Heart right ventricle (tissue), 16 donors: ENCODE measurements at regions of chr12 and their contacts with region 1.

Region 1: DNA sequence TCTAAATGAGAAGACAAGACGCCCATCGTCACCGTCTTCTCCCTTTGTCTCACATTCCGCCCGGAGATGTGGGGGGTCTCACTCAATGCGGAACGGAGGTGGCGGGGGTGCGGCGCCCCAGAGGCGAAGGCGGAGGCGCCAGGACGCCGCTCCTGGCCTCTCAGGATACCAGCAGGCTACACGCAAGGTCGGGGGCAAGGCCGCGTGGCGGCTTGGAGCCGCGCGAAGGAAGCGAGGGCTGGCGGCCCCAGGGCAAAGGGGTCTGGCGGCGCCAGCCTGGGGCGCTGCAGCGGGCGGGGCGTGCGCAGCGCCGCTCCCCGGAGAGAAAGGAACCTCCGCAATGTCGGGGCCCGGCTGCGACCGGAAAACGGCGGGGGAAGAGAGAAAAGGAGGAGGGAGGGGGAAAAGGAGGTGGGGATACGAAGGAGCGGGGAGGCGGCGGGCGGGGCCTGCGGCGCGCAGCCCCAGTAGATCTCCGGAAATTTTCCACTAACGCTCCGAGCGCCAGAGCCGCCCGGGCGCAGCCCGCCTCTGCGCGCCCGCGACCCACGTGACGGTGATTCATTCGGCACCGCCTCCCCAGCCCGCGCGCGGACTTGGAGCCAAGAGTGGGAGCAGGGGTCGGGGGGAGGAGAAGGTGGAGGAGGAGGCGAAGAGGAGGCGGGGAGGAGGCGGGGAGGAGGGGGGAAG is 10.5 kb upstream of the SLC38A2 start:
- DNase-seq: peak; percentile 97 to 98
- ATAC-seq: peak; percentile 92 to 97 (median 94)
- H3K4me3 ChIP-seq: peak overlapping the region; percentile 32 to 89 (median 70)
- H3K27ac ChIP-seq: peak overlapping the region; percentile 94 to 100 (median 99)
- H3K4me1 ChIP-seq: peaks cover 0 to 55% (median 46%) of the 10 kb centered on the region in 9 donors
- H3K27me3 ChIP-seq: no peaks in the 10 kb centered on the region
- CTCF ChIP-seq: peak in 2 of 9 donors; percentile 39 to 53

Region 2: GRCh38 chr12:45990468-45991283 is 392.4 kb before region 1 on chr12 and contains the start of gene SCAF11:
- intact Hi-C with region 1: loop called in 3 of 10 experiments (anchors 10 kb)
- DNase-seq: peak; percentile 100
- ATAC-seq: peak; percentile 92 to 97 (median 95)
- H3K4me3 ChIP-seq: peak within 1 kb of the TSS; percentile 68 to 97 (median 86)
- H3K27ac ChIP-seq: peak within 1 kb of the TSS; percentile 96 to 100 (median 99)
- H3K4me1 ChIP-seq: peaks cover 7 to 49% (median 39%) of the 10 kb centered on the region in 9 donors
- H3K27me3 ChIP-seq: no peaks in the 10 kb centered on the region
- CTCF ChIP-seq: peak; percentile 90 to 98 (median 94)
- total RNA-seq, gene SCAF11: 71.9 to 112 (median 87.3) TPM

Region 3: GRCh38 chr12:46227616-46228015 is 155.5 kb before region 1 on chr12:
- intact Hi-C with region 1: no loop called
- DNase-seq: no peak
- ATAC-seq: no peak
- H3K4me3 ChIP-seq: no peak overlapping the region
- H3K27ac ChIP-seq: no peak overlapping the region
- H3K4me1 ChIP-seq: peaks cover 0 to 40% (median 9%) of the 10 kb centered on the region in 9 donors
- H3K27me3 ChIP-seq: no peaks in the 10 kb centered on the region
- CTCF ChIP-seq: no peak

Region 4: DNA sequence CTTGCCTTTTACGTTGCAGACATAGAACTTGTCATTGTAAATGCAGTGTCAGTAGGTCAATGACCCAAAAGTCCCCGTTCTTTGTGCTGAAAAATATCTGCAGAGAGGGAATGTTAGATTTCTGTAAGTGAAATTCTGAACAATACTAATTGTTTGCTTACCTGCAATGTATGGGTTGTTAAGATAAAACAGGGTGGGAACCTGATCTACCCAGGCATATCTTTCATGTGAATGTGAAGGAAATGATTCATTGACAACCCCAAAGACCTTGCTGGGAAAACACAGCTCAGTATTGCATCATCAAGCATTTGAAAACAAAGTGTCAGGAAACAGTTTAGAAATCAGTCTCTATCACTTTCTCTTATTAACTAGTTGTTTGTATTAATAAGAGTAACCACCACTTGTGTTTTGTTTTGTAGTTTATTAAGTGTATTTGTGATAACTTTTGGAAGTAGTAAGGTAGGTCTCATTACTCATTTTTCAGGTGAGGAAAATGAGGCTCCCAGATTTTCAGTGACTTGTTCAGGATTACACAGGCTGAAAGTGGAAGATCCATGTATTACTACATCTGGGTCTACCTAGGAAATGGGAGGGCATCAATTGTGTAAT is 47.3 kb after region 1 on chr12:
- intact Hi-C with region 1: loop called in 3 of 10 experiments (anchors 2 to 10 kb)
- DNase-seq: peak in 1 of 2 donors; percentile 16
- ATAC-seq: peak in 7 of 8 donors; percentile 54 to 86 (median 76)
- H3K4me3 ChIP-seq: no peak overlapping the region
- H3K27ac ChIP-seq: peak overlapping the region in 8 of 10 donors; percentile 49 to 83 (median 71)
- H3K4me1 ChIP-seq: peaks cover 0 to 34% (median 28%) of the 10 kb centered on the region in 9 donors
- H3K27me3 ChIP-seq: no peaks in the 10 kb centered on the region
- CTCF ChIP-seq: no peak

Region 5: GRCh38 chr12:46459861-46460545 is 76.9 kb after region 1 on chr12:
- intact Hi-C with region 1: loop called in 2 of 10 experiments (anchors 5 to 10 kb)
- DNase-seq: no peak
- ATAC-seq: peak in 4 of 8 donors; percentile 20 to 32 (median 30)
- H3K4me3 ChIP-seq: no peak overlapping the region
- H3K27ac ChIP-seq: peak overlapping the region in 4 of 10 donors; percentile 12 to 60 (median 28)
- H3K4me1 ChIP-seq: peaks cover 4 to 67% (median 47%) of the 10 kb centered on the region in 9 donors
- H3K27me3 ChIP-seq: no peaks in the 10 kb centered on the region
- CTCF ChIP-seq: no peak

Region 6: DNA sequence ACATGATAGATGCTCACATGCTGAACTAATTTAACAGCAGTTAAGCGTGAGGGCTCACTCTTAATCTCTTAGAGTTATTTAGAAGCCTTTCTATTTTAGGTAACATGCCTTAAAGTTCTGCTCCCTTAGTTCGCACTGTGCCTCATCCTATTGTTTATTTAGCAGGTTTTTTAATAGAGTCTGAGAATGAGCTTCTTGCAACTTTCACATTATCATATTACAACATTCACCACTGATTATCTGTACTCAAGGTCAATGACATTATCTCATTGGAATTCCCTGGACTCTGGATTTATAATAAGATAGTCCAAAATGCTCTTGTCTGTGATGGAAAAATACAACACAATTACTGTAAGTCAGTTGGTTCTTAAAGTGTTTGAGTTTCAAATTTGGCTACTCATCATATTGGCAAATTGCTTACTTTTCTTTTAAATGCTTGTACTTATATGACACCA is 173.0 kb after region 1 on chr12:
- intact Hi-C with region 1: loop called in 3 of 10 experiments (anchors 5 to 10 kb)
- DNase-seq: no peak
- ATAC-seq: peak; percentile 79 to 95 (median 88)
- H3K4me3 ChIP-seq: no peak overlapping the region
- H3K27ac ChIP-seq: peak overlapping the region; percentile 25 to 77 (median 68)
- H3K4me1 ChIP-seq: peaks cover 0 to 53% (median 21%) of the 10 kb centered on the region in 9 donors
- H3K27me3 ChIP-seq: no peaks in the 10 kb centered on the region
- CTCF ChIP-seq: no peak